Head of caudate nucleus (tissue), 42 donors: ENCODE measurements at regions of chr7 and their contacts with region 1.

Region 1: GRCh38 chr7:91034459-91035368 is 229.5 kb upstream of the FZD1 start:
- DNase-seq: peak; percentile 9 to 87 (median 71)

Region 2: DNA sequence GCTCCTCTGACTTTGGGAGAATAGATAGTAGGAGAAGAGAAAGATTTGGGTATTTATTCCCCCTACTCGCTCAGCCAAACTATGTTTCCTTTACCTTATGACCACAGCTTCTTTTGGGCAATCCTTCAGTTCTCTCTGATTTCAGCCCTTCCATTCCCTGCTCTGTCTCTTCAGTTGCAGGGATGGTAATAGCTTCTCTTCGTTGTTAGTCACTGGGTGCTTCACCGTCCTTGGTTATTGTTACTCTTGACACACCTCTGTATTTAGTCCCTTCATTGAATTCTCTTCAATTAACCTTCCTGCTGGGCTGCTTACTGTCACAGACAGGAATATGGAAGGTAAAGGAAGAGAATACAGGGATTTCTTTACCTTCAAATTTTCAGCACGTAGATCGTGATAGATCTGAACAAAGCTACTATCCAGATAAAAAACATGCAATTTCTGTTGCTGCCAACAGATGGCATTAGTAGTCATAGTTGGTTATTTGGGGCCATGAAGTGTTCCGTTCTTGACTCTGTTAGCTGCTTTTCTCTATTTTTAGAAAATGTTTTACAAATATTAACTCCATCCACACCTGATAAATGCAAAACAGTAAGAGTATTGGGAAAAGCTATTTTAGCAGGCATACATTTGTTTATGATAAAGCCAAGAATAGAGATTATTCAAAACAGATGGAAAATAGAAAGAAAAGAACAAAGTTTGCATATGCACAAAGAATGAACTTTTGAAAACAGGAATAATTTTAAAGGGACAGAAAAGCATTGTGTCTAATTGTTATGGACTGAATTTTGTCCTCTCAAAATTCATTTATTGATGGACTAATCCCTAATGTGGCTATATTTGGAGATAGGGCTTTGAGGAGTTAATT is 579.3 kb before region 1 on chr7:
- intact Hi-C with region 1: loop called (anchors 10 kb)
- DNase-seq: peak in 12 of 42 donors; percentile 4 to 67 (median 32)

Region 3: GRCh38 chr7:90708841-90709317 is 325.8 kb before region 1 on chr7:
- intact Hi-C with region 1: loop called (anchors 10 kb)
- DNase-seq: peak; percentile 14 to 84 (median 52)

Region 4: DNA sequence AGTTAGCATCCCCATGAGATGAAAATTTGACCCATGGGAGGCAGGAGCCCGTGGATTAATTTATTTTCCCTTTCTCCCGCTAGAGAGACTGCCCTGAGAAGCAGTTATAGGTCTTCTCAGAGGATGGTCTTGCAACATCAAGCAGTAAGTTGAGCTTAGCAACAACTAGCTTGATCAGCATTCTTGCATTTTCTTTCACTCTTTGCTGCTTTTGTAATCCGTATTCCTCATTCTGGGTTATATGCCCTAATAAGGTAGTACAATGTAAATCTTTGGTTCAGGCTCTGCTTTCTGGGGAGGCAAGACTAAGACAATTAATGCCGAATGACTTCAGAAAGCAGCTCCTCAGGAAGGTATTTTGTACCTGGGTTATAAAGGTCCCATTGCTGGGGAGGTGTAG is 376.3 kb after region 1 on chr7:
- intact Hi-C with region 1: no loop called
- DNase-seq: no peak